Adrenal gland (tissue), 19 donors: ENCODE measurements at regions of chr3 and their contacts with region 1.

Region 1: GRCh38 chr3:15256861-15257341 is 50.9 kb downstream of the CAPN7 start:
- DNase-seq: no peak
- H3K4me3 ChIP-seq: no peak overlapping the region
- H3K27ac ChIP-seq: peak overlapping the region in 2 of 5 donors; percentile 67 to 72
- H3K4me1 ChIP-seq: peaks cover 0 to 13% of the 10 kb centered on the region in 2 donors
- H3K27me3 ChIP-seq: no peaks in the 10 kb centered on the region
- CTCF ChIP-seq: no peak
- POLR2A ChIP-seq: no peak

Region 2: GRCh38 chr3:14836049-14836468 is 420.8 kb before region 1 on chr3:
- intact Hi-C with region 1: no loop called
- DNase-seq: peak in 6 of 7 donors; percentile 43 to 78 (median 58)
- H3K4me3 ChIP-seq: no peak overlapping the region
- H3K27ac ChIP-seq: peak overlapping the region in 1 of 5 donors; percentile 44
- H3K4me1 ChIP-seq: peaks cover 0 to 29% of the 10 kb centered on the region in 2 donors
- H3K27me3 ChIP-seq: no peaks in the 10 kb centered on the region
- CTCF ChIP-seq: no peak
- POLR2A ChIP-seq: no peak

Region 3: GRCh38 chr3:15148614-15149013 is 108.3 kb before region 1 on chr3:
- intact Hi-C with region 1: no loop called
- DNase-seq: peak in 6 of 7 donors; percentile 16 to 55 (median 35)
- H3K4me3 ChIP-seq: no peak overlapping the region
- H3K27ac ChIP-seq: no peak overlapping the region
- H3K4me1 ChIP-seq: no peaks in the 10 kb centered on the region
- H3K27me3 ChIP-seq: no peaks in the 10 kb centered on the region
- CTCF ChIP-seq: no peak
- POLR2A ChIP-seq: no peak

Region 4: DNA sequence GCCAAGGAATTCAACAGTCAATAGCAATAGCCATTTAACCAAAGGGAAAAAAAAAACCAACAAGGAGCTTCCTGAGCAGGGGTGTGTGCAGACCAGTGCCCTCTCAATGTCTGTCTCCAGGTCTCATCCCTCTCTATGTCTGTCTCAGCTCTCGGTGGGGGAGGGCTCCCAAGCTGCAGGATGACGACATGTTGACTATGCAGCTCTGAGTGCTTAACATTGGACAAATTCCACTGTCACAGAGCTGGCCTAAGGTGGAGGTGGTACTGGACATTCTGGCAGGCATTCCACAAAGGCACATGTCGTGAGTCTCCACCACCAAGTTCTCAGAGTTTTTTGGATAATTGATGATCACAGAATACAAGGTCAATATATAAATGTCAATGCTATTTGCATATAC is 52.9 kb before region 1 on chr3:
- intact Hi-C with region 1: no loop called
- DNase-seq: peak in 1 of 7 donors; percentile 19
- H3K4me3 ChIP-seq: no peak overlapping the region
- H3K27ac ChIP-seq: no peak overlapping the region
- H3K4me1 ChIP-seq: peaks cover 13 to 19% of the 10 kb centered on the region in 2 donors
- H3K27me3 ChIP-seq: no peaks in the 10 kb centered on the region
- CTCF ChIP-seq: no peak
- POLR2A ChIP-seq: no peak

Region 5: DNA sequence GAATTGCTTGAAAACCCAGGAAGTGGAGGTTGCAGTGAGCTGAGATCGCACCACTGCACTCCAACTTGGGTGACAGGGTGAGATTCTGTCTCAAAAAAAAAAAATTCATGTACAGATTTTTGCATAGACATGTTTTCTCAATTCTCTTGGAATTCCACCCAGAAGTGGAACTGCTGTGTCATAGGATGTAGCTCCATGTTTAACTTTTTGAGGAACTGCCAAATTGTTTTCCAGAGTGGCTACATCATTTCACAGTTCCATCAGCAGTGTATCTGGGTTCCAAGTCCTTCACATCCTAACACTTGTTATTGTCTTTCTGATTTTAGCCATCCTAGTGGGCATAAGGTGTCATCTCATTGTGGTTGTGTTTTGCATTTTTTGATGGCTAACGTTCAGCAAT is 40.9 kb before region 1 on chr3:
- intact Hi-C with region 1: loop called in 1 of 2 experiments (anchors 5 kb)
- DNase-seq: no peak
- H3K4me3 ChIP-seq: no peak overlapping the region
- H3K27ac ChIP-seq: peak overlapping the region in 1 of 5 donors; percentile 7
- H3K4me1 ChIP-seq: peaks cover 3% of the 10 kb centered on the region in 2 donors
- H3K27me3 ChIP-seq: no peaks in the 10 kb centered on the region
- CTCF ChIP-seq: no peak
- POLR2A ChIP-seq: no peak